ENCODE measurements at regions of chr2 and their contacts with region 1.

Region 1: GRCh38 chr2:153519257-153519875 is 40.8 kb upstream of the RPRM start:
- DNase-seq: peak; percentile 62
- H3K4me3 Mint-ChIP-seq: no peak overlapping the region
- H3K27ac Mint-ChIP-seq: no peak overlapping the region
- H3K4me1 Mint-ChIP-seq: no peaks in the 10 kb centered on the region
- H3K27me3 Mint-ChIP-seq: peaks cover 4% of the 10 kb centered on the region

Region 2: DNA sequence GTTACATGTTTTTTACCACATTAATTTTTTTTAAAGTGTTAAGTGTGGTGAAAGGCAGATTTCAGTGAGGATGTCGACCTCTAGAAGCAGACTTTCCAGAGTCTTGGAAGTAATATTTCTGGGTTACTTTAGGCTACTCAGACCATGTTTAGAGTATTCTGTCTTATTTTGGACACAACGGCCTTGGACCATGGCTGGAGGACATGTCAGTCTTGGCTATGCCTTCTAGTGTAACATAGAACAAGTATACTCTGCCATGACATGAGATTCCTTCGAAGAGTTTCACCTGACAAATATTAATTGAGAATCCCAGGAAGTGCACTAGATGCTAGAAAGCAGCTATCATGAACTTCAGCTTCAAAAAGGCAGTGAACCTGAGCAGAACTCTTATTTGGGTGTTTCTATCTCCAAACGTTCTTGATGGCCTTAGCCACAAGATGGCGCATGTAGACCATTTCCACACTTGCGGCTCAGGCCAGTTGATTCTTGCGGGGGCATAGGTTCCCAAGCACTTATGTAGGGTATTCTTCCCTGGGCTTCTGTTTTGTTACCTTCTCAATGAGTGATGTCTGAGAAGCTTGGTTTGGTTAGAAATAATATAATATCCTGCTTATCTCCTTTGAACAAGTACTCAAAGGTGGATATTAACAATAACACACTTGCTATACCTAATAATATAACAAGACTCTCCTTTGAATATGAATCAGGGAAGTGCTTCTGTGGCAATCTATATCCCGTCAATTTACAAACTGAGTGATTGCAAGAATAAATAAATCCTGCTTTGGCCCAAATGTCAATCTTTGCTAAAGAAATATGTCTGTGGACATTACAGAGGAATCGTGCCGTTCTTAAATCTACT is 1482.5 kb before region 1 on chr2:
- CTCF ChIA-PET with region 1: no interaction called
- POLR2A ChIA-PET with region 1: no interaction called
- intact Hi-C with region 1: loop called (anchors 5 kb)
- DNase-seq: peak; percentile 69
- H3K4me3 Mint-ChIP-seq: no peak overlapping the region
- H3K27ac Mint-ChIP-seq: no peak overlapping the region
- H3K4me1 Mint-ChIP-seq: no peaks in the 10 kb centered on the region
- H3K27me3 Mint-ChIP-seq: no peaks in the 10 kb centered on the region

Region 3: GRCh38 chr2:152925547-152926327 is 593.6 kb before region 1 on chr2:
- CTCF ChIA-PET with region 1: interaction called, 4 read pairs
- POLR2A ChIA-PET with region 1: no interaction called
- intact Hi-C with region 1: loop called (anchors 1 kb)
- DNase-seq: peak; percentile 66
- H3K4me3 Mint-ChIP-seq: no peak overlapping the region
- H3K27ac Mint-ChIP-seq: no peak overlapping the region
- H3K4me1 Mint-ChIP-seq: no peaks in the 10 kb centered on the region
- H3K27me3 Mint-ChIP-seq: peaks cover 2% of the 10 kb centered on the region

Region 4: GRCh38 chr2:153163058-153163457 is 356.3 kb before region 1 on chr2:
- CTCF ChIA-PET with region 1: interaction called, 3 read pairs
- POLR2A ChIA-PET with region 1: no interaction called
- intact Hi-C with region 1: loop called (anchors 1 kb)
- DNase-seq: no peak
- H3K4me3 Mint-ChIP-seq: no peak overlapping the region
- H3K27ac Mint-ChIP-seq: no peak overlapping the region
- H3K4me1 Mint-ChIP-seq: no peaks in the 10 kb centered on the region
- H3K27me3 Mint-ChIP-seq: no peaks in the 10 kb centered on the region